ENCODE measurements at regions of chr6 and their contacts with region 1.

Region 1: DNA sequence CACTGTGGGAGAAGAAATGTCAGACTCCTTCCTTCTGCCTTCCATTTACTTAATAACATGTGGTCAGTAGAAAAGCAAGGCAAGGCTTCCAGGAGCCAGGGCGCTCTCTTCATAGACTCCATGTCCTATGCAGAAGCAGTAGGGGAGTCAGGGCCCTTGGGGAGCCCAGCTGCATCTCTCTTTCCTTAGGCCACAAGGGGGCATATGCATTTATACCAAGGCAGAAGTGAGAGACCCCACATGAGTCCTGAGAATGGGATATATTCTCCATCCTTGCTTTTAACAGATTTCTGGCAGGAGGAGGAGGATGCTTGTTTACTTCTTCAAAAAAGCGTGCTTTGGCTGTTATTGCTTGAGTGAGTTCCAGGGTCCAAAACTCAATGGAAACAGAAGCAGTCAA is 198.5 kb downstream of the HIVEP2 start:
- DNase-seq: peak in 11 of 14 experiments; percentile 7 to 67 (median 15)
- ATAC-seq: peak; percentile 55
- H3K4me3 ChIP-seq: no peak overlapping the region
- H3K4me3 Mint-ChIP-seq: no peak overlapping the region
- H3K27ac ChIP-seq: no peak overlapping the region
- H3K27ac Mint-ChIP-seq: no peak overlapping the region
- H3K4me1 ChIP-seq: peaks cover 6% of the 10 kb centered on the region
- H3K4me1 Mint-ChIP-seq: peaks cover 28% of the 10 kb centered on the region
- H3K27me3 ChIP-seq: no peaks in the 10 kb centered on the region
- H3K27me3 Mint-ChIP-seq: no peaks in the 10 kb centered on the region
- CTCF ChIP-seq: peak; percentile 56

Region 2: DNA sequence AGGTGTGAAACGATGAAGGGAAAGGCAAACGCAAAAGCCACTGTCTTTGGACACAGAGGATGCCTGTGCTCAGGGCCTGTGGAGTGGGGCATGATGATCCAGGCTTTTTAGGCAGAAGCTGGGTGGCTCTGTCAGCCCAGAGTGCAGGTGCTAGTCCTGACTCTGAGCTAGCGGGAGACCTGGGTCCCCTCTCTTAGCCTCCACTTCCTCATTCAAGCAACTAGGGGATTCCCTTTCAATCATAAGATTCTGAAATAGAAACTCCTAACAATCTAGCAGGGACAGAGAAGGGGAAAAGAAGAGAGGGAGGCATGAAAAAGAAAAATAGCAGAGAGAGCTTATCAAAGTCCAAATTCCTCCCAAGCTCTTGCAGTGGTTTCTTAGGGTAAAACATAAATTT is 206.1 kb after region 1 on chr6:
- CTCF ChIA-PET with region 1: no interaction called
- POLR2A ChIA-PET with region 1: no interaction called
- intact Hi-C with region 1: loop called in 1 of 2 experiments (anchors 2 kb)
- DNase-seq: peak in 1 of 14 experiments; percentile 46
- ATAC-seq: no peak
- H3K4me3 ChIP-seq: no peak overlapping the region
- H3K4me3 Mint-ChIP-seq: no peak overlapping the region
- H3K27ac ChIP-seq: no peak overlapping the region
- H3K27ac Mint-ChIP-seq: peak overlapping the region; percentile 98
- H3K4me1 ChIP-seq: no peaks in the 10 kb centered on the region
- H3K4me1 Mint-ChIP-seq: peaks cover 30% of the 10 kb centered on the region
- H3K27me3 ChIP-seq: no peaks in the 10 kb centered on the region
- H3K27me3 Mint-ChIP-seq: no peaks in the 10 kb centered on the region
- CTCF ChIP-seq: no peak

Region 3: GRCh38 chr6:143258945-143259344 is 512.4 kb after region 1 on chr6:
- CTCF ChIA-PET with region 1: no interaction called
- POLR2A ChIA-PET with region 1: no interaction called
- intact Hi-C with region 1: no loop called
- DNase-seq: no peak
- ATAC-seq: no peak
- H3K4me3 ChIP-seq: no peak overlapping the region
- H3K4me3 Mint-ChIP-seq: no peak overlapping the region
- H3K27ac ChIP-seq: no peak overlapping the region
- H3K27ac Mint-ChIP-seq: no peak overlapping the region
- H3K4me1 ChIP-seq: no peaks in the 10 kb centered on the region
- H3K4me1 Mint-ChIP-seq: no peaks in the 10 kb centered on the region
- H3K27me3 ChIP-seq: no peaks in the 10 kb centered on the region
- H3K27me3 Mint-ChIP-seq: no peaks in the 10 kb centered on the region
- CTCF ChIP-seq: no peak

Measured in CD4-positive, alpha-beta T cell (primary cell).